Calu3 (cell line): ENCODE measurements at regions of chr9 and their contacts with region 1.

Region 1: GRCh38 chr9:101326501-101326900 is 58.3 kb downstream of the BAAT start:
- DNase-seq: no peak
- H3K4me3 Mint-ChIP-seq: no peak overlapping the region
- H3K27ac Mint-ChIP-seq: peak overlapping the region; percentile 39
- H3K4me1 Mint-ChIP-seq: peaks cover 34% of the 10 kb centered on the region
- H3K27me3 Mint-ChIP-seq: no peaks in the 10 kb centered on the region
- CTCF ChIP-seq: no peak

Region 2: GRCh38 chr9:100160021-100160420 is 1166.5 kb before region 1 on chr9:
- CTCF ChIA-PET with region 1: no interaction called
- intact Hi-C with region 1: no loop called
- DNase-seq: no peak
- H3K4me3 Mint-ChIP-seq: no peak overlapping the region
- H3K27ac Mint-ChIP-seq: no peak overlapping the region
- H3K4me1 Mint-ChIP-seq: no peaks in the 10 kb centered on the region
- H3K27me3 Mint-ChIP-seq: no peaks in the 10 kb centered on the region
- CTCF ChIP-seq: no peak

Region 3: DNA sequence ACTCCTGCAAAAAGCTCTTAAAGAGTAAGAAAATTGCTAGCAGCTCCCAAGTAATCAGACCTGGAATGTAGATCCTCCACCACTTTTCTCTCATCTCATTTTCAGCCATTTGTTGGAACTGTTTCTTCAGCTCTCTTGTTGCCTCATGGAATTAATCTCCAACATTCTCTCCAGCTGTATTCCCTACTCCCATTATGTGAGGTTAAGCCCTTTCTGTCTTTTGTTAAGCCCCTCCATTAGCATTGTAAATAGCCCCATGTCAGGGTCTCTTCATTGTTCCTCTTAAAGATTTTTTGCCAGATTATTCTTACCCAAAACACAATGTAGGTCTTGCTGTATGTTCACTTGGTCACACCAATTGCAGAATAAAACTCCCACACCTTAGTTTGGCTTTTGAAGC is 178.2 kb before region 1 on chr9:
- CTCF ChIA-PET with region 1: no interaction called
- intact Hi-C with region 1: no loop called
- DNase-seq: no peak
- H3K4me3 Mint-ChIP-seq: no peak overlapping the region
- H3K27ac Mint-ChIP-seq: no peak overlapping the region
- H3K4me1 Mint-ChIP-seq: no peaks in the 10 kb centered on the region
- H3K27me3 Mint-ChIP-seq: peaks cover 26% of the 10 kb centered on the region
- CTCF ChIP-seq: no peak

Region 4: GRCh38 chr9:101354143-101354764 is 27.8 kb after region 1 on chr9:
- CTCF ChIA-PET with region 1: interaction called, 4 read pairs
- intact Hi-C with region 1: loop called (anchors 1 kb)
- DNase-seq: peak; percentile 32
- H3K4me3 Mint-ChIP-seq: peak overlapping the region; percentile 5
- H3K27ac Mint-ChIP-seq: peak overlapping the region; percentile 33
- H3K4me1 Mint-ChIP-seq: peaks cover 33% of the 10 kb centered on the region
- H3K27me3 Mint-ChIP-seq: no peaks in the 10 kb centered on the region
- CTCF ChIP-seq: no peak

Region 5: DNA sequence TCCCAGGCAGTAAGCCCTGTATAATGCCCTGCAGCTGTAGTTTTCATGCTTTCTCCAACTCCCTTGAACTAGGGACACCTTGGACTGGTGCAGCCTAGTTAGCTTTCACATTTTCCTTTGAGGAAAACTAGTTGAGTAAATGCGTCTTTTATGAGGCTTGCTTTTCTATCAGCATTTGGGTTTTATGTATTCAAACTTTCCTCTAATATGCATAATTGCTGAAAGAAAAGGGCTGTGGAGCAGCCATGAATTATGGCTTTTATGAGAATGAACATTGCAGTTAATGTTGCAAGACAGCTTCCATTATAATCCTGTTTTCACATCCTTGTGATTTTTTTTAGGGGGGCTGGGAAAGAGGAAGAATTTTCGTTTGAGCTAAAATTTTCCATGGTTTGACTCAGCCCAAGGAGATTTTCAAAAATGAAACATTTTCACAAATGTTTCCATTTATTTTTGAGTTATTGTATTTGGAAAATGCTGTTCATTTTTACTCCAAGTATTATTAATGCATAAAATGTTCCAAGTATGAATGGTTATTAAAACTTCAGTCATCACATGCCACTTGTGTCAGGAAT is 326.2 kb after region 1 on chr9:
- CTCF ChIA-PET with region 1: no interaction called
- intact Hi-C with region 1: no loop called
- DNase-seq: no peak
- H3K4me3 Mint-ChIP-seq: no peak overlapping the region
- H3K27ac Mint-ChIP-seq: no peak overlapping the region
- H3K4me1 Mint-ChIP-seq: no peaks in the 10 kb centered on the region
- H3K27me3 Mint-ChIP-seq: peaks cover 18% of the 10 kb centered on the region
- CTCF ChIP-seq: no peak